A549 (cell line): ENCODE measurements at regions of chr16 and their contacts with region 1.

Region 1: GRCh38 chr16:30637942-30638341 is 12.8 kb upstream of the PRR14 start:
- DNase-seq: peak; percentile 42 to 82
- ATAC-seq: peak; percentile 54 to 73
- H3K4me3 ChIP-seq: no peak overlapping the region
- H3K27ac ChIP-seq: no peak overlapping the region
- H3K4me1 ChIP-seq: peaks cover 6% of the 10 kb centered on the region; the same call in 1 of the 3 replicates
- CTCF ChIP-seq: peak; percentile 57
- EP300 ChIP-seq: no peak
- POLR2A ChIP-seq: no peak
- RAD21 ChIP-seq: peak; percentile 62 to 77

Region 2: GRCh38 chr16:30382111-30382881 is 255.6 kb before region 1 on chr16 and contains the start of gene SEPTIN1:
- CTCF ChIA-PET with region 1: no interaction called
- POLR2A ChIA-PET with region 1: no interaction called
- DNase-seq: no peak
- ATAC-seq: no peak
- H3K4me3 ChIP-seq: no peak within 1 kb of the TSS
- H3K27ac ChIP-seq: no peak within 1 kb of the TSS
- H3K4me1 ChIP-seq: peaks cover 7% of the 10 kb centered on the region
- CTCF ChIP-seq: no peak
- EP300 ChIP-seq: no peak
- POLR2A ChIP-seq: peak; percentile 20; the same call in 1 of the 2 replicates
- RAD21 ChIP-seq: no peak
- polyA plus RNA-seq, gene SEPTIN1: 0.13 and 0.17 TPM in 2 replicates

Region 3: GRCh38 chr16:30518555-30518954 is 119.4 kb before region 1 on chr16:
- CTCF ChIA-PET with region 1: no interaction called
- POLR2A ChIA-PET with region 1: no interaction called
- DNase-seq: no peak
- ATAC-seq: no peak
- H3K4me3 ChIP-seq: no peak overlapping the region
- H3K27ac ChIP-seq: no peak overlapping the region
- H3K4me1 ChIP-seq: peaks cover 14% of the 10 kb centered on the region
- CTCF ChIP-seq: no peak
- EP300 ChIP-seq: no peak
- POLR2A ChIP-seq: no peak
- RAD21 ChIP-seq: no peak

Region 4: GRCh38 chr16:30650369-30651123 is 12.6 kb after region 1 on chr16 and contains the start of gene PRR14:
- CTCF ChIA-PET with region 1: interaction called, 26 read pairs
- POLR2A ChIA-PET with region 1: interaction called, 12 read pairs
- DNase-seq: peak; percentile 92 to 99
- ATAC-seq: peak; percentile 88 to 91
- H3K4me3 ChIP-seq: peak within 1 kb of the TSS; percentile 82
- H3K27ac ChIP-seq: peak within 1 kb of the TSS; percentile 92 to 96
- H3K4me1 ChIP-seq: peaks cover 12% of the 10 kb centered on the region; the same call in 2 of the 3 replicates
- CTCF ChIP-seq: no peak
- EP300 ChIP-seq: no peak
- POLR2A ChIP-seq: no peak; the same call in 1 of the 2 replicates
- RAD21 ChIP-seq: no peak
- polyA plus RNA-seq, gene PRR14: 6.3 and 8.4 TPM in 2 replicates

Region 5: DNA sequence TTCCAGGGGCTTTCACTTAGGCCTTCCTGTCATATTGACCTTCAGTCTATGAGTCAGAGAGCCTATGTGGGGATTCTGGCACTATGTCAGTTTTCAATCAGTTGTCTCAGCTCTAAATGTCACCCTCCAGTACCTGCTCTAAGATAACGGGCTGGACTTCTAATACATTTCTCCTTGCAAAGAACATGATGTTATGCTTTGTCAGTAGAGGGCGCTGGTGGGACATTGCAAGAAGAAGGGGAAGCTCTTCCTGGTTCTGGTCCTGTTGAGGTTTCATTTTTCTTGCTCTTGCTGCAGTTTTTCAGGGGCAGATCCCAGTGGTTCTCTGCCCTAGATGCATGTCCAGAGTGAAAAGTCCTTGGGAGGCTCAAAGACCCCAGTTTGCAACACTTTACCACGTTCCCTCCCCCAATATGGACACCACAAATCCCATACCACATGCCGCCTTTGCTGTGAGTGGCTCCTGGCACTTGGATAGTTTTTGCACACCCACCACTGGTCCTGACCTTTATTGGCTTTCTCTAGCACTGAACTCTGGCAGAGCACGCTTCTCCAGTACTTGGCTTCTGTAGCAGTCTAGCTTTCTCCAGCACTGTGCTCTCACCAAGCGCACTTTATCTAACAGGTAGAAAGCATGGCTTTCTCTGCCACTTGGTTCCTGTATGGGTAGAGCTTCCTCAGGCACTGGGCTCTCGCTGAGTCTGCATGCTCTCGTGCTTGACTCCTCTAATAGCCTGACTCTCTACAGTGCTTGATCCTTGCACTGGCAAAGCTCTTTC is 206.9 kb after region 1 on chr16:
- CTCF ChIA-PET with region 1: no interaction called
- POLR2A ChIA-PET with region 1: no interaction called
- DNase-seq: peak; percentile 87 to 90
- ATAC-seq: peak; percentile 89 to 97
- H3K4me3 ChIP-seq: no peak overlapping the region
- H3K27ac ChIP-seq: peak overlapping the region; percentile 50 to 58; a peak in 5 of 6 replicates
- H3K4me1 ChIP-seq: peaks cover 11% of the 10 kb centered on the region
- CTCF ChIP-seq: peak; percentile 88
- EP300 ChIP-seq: no peak
- POLR2A ChIP-seq: no peak
- RAD21 ChIP-seq: peak; percentile 84 to 91